Left lung (tissue), 14 donors: ENCODE measurements at regions of chr1 and their contacts with region 1.

Region 1: DNA sequence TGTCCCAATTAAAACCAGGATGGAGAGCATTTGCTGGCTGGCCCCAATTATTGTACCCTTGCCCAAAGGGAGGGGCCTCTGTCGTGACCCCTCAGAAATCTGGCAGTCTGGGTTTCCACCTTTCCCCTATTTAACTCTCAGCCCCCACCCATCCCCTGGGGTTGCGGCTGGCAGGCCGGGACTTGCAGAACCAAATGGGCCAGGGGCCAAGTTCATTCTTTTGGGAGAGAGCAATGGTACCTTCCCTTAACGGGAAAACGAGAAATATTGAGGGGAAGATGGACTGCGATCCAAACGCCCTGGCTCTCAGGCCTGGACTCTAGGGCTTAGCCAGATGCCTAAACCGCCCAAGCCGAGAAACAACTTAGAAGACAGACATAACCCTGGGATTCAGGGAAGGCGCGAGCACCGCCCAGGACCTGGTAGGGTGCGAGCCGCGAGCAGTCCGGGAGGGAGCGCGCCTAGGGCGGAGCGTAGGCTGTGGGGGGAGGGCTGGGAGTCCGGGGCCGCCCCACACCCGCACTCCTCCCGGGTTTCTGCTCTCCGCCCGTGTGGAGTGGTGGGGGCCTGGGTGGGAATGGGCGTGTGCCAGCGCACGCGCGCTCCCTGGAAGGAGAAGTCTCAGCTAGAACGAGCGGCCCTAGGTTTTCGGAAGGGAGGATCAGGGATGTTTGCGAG is at the start of gene SLC27A3:
- DNase-seq: peak; percentile 74 to 94 (median 86)
- ATAC-seq: peak; percentile 89
- H3K4me3 ChIP-seq: peak within 1 kb of the TSS; percentile 68 to 84
- H3K27ac ChIP-seq: peak within 1 kb of the TSS; percentile 85 to 95
- H3K4me1 ChIP-seq: peaks cover 17 to 83% of the 10 kb centered on the region in 2 donors
- H3K27me3 ChIP-seq: no peaks in the 10 kb centered on the region
- CTCF ChIP-seq: no peak
- polyA plus RNA-seq, gene SLC27A3: 32.4 to 50.3 (median 40.5) TPM

Region 2: GRCh38 chr1:153679337-153680119 is 95.4 kb before region 1 on chr1:
- intact Hi-C with region 1: loop called in 1 of 2 experiments (anchors 5 kb)
- DNase-seq: peak in 1 of 4 donors; percentile 85
- ATAC-seq: peak; percentile 54
- H3K4me3 ChIP-seq: peak overlapping the region; percentile 51 to 66
- H3K27ac ChIP-seq: peak overlapping the region; percentile 56 to 74
- H3K4me1 ChIP-seq: peaks cover 12 to 35% of the 10 kb centered on the region in 2 donors
- H3K27me3 ChIP-seq: peaks cover 8 to 39% of the 10 kb centered on the region in 2 donors
- CTCF ChIP-seq: peak in 1 of 2 donors; percentile 20

Region 3: GRCh38 chr1:153922972-153923925 is 148.3 kb after region 1 on chr1 and contains the start of gene GATAD2B:
- intact Hi-C with region 1: no loop called
- DNase-seq: peak; percentile 99 to 100 (median 100)
- ATAC-seq: peak; percentile 97
- H3K4me3 ChIP-seq: peak within 1 kb of the TSS; percentile 72 to 87
- H3K27ac ChIP-seq: peak within 1 kb of the TSS; percentile 84 to 89
- H3K4me1 ChIP-seq: peaks cover 13 to 48% of the 10 kb centered on the region in 2 donors
- H3K27me3 ChIP-seq: no peaks in the 10 kb centered on the region
- CTCF ChIP-seq: no peak
- polyA plus RNA-seq, gene GATAD2B: 31.5 to 37.4 (median 32.3) TPM